Activated naive CD4-positive, alpha-beta T cell treated with anti-CD3 and anti-CD28 coated beads for 36 hours (primary cell): ENCODE measurements at regions of chr2 and their contacts with region 1.

Region 1: DNA sequence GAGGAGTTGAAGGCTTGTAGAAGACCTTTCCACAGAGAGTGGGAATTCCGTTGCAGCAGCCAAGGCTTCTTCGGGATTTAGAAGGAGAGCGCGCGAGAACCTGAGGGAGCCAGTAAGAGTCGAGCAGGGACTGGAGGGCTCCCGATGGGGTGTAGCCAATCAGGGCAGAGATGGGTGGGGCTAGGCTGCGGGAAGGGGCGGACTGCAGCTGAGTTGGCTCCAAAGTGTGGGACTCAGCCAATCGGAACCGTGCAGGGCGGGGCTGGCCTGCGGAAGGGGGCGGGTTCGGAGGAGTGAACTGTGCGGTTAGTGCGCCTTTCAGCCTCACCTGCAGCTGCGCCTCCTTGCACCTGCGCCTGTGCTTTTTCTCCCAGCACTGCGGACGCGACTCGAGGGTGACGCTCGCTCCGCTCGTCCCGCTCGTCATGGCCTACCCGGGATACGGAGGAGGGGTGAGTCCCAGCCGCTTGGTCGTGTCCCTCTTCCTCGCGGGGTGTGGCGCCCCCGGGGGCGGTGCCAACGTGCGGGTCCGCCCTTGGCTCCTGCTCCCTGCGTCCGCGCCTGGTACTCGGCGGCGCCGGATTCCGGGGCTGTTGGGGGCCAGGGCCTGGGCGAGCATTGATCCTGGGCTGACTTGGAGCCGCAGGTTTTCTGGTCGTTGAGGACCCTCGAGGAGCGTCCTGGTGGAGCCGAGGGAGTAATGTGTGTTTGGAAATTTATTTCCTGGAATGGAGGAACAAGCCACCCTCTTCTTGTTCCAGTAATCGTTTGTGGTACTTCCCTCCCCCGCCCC is at the start of gene GCA:
- DNase-seq: peak; percentile 99
- H3K4me3 Mint-ChIP-seq: peak within 1 kb of the TSS; percentile 87
- H3K27ac Mint-ChIP-seq: peak within 1 kb of the TSS; percentile 72
- H3K4me1 Mint-ChIP-seq: peaks cover 12% of the 10 kb centered on the region
- H3K27me3 Mint-ChIP-seq: no peaks in the 10 kb centered on the region
- total RNA-seq, gene GCA: 36.7 to 40.2 TPM

Region 2: DNA sequence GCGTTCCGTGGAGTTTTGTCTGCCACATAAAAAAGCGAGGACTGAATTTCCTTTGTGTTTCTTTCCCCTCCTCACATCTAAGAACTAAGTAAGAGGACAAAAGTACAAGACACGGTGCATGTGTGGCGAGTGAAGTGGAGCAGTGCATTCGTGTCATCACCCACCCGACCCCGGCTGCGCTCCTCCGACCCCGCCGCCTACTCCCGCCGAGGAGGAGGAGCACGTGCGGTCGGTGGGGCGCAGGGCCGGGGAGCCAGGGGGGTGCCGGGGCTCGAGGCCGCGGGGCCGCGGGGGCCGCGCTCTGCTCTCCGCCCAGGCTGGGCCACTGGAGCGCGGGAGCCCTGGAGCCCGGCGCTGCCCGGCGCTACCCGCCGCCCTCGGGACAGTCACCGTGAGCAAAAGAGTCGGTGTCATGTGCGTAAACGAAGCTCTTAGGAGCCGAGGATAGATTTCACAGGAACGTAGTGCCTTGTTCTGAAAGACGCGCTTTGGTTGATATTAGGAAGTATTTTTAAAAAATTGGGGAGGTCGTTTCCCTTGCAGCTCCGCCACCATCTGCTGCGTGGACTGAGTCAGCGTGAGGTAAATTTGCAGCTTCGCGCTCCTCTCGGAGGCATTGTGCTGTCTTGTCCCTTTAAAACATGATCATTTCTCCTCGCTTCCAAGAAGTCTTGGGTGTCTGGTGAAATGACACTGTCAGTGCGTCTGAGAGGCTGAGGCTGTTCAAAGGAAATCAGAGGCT is 916.9 kb before region 1 on chr2:
- CTCF ChIA-PET with region 1: no interaction called
- intact Hi-C with region 1: loop called (anchors 10 kb)
- DNase-seq: peak; percentile 29
- H3K4me3 Mint-ChIP-seq: peak overlapping the region; percentile 56
- H3K27ac Mint-ChIP-seq: peak overlapping the region; percentile 31
- H3K4me1 Mint-ChIP-seq: peaks cover 29% of the 10 kb centered on the region
- H3K27me3 Mint-ChIP-seq: peaks cover 76% of the 10 kb centered on the region

Region 3: GRCh38 chr2:163312713-163313112 is 968.7 kb after region 1 on chr2:
- CTCF ChIA-PET with region 1: no interaction called
- intact Hi-C with region 1: no loop called
- DNase-seq: no peak
- H3K4me3 Mint-ChIP-seq: no peak overlapping the region
- H3K27ac Mint-ChIP-seq: no peak overlapping the region
- H3K4me1 Mint-ChIP-seq: no peaks in the 10 kb centered on the region
- H3K27me3 Mint-ChIP-seq: no peaks in the 10 kb centered on the region